Caco-2 (cell line): ENCODE measurements at regions of chr7 and their contacts with region 1.

Region 1: GRCh38 chr7:22672846-22673652 is 54.0 kb upstream of the IL6 start:
- DNase-seq: peak; percentile 81 to 82
- H3K4me3 ChIP-seq: no peak overlapping the region
- H3K4me3 Mint-ChIP-seq: peak overlapping the region; percentile 39
- H3K27ac Mint-ChIP-seq: peak overlapping the region; percentile 78
- H3K4me1 ChIP-seq: peaks cover 57% of the 10 kb centered on the region
- H3K4me1 Mint-ChIP-seq: peaks cover 30% of the 10 kb centered on the region
- H3K27me3 ChIP-seq: no peaks in the 10 kb centered on the region
- H3K27me3 Mint-ChIP-seq: no peaks in the 10 kb centered on the region
- CTCF ChIP-seq: no peak

Region 2: GRCh38 chr7:22577396-22578001 is 95.5 kb before region 1 on chr7:
- CTCF ChIA-PET with region 1: no interaction called
- POLR2A ChIA-PET with region 1: no interaction called
- intact Hi-C with region 1: loop called (anchors 1 kb)
- DNase-seq: peak; percentile 55 to 59
- H3K4me3 ChIP-seq: no peak overlapping the region
- H3K4me3 Mint-ChIP-seq: peak overlapping the region; percentile 30
- H3K27ac Mint-ChIP-seq: peak overlapping the region; percentile 75
- H3K4me1 ChIP-seq: peaks cover 63% of the 10 kb centered on the region
- H3K4me1 Mint-ChIP-seq: peaks cover 40% of the 10 kb centered on the region
- H3K27me3 ChIP-seq: no peaks in the 10 kb centered on the region
- H3K27me3 Mint-ChIP-seq: no peaks in the 10 kb centered on the region
- CTCF ChIP-seq: no peak

Region 3: GRCh38 chr7:22586786-22587140 is 86.3 kb before region 1 on chr7:
- CTCF ChIA-PET with region 1: interaction called, 7 read pairs
- POLR2A ChIA-PET with region 1: no interaction called
- intact Hi-C with region 1: loop called (anchors 2 kb)
- DNase-seq: peak; percentile 59 to 70
- H3K4me3 ChIP-seq: no peak overlapping the region
- H3K4me3 Mint-ChIP-seq: no peak overlapping the region
- H3K27ac Mint-ChIP-seq: peak overlapping the region; percentile 24
- H3K4me1 ChIP-seq: peaks cover 39% of the 10 kb centered on the region
- H3K4me1 Mint-ChIP-seq: peaks cover 32% of the 10 kb centered on the region
- H3K27me3 ChIP-seq: no peaks in the 10 kb centered on the region
- H3K27me3 Mint-ChIP-seq: no peaks in the 10 kb centered on the region
- CTCF ChIP-seq: peak; percentile 55